Activated T-helper 1 cell treated with anti-CD3 and anti-CD28 coated beads, Interleukin-12 subunit alpha, Interleukin-12 subunit beta, Interleukin-2, Interleukin-4 antibody, amounts not matched to agents 30 ng/mL and 10 ng/mL and 1 ng/mL, durations not matched to agents 14 hours and 24 hours and 36 hours (primary cell): ENCODE measurements at regions of chr10 and their contacts with region 1.

Region 1: GRCh38 chr10:103685880-103686669 is 169.3 kb downstream of the SH3PXD2A start:
- DNase-seq: peak; percentile 66
- H3K4me3 Mint-ChIP-seq: no peak overlapping the region
- H3K27ac Mint-ChIP-seq: no peak overlapping the region
- H3K4me1 Mint-ChIP-seq: peaks cover 17% of the 10 kb centered on the region
- H3K27me3 Mint-ChIP-seq: no peaks in the 10 kb centered on the region

Region 2: GRCh38 chr10:103533827-103534226 is 152.2 kb before region 1 on chr10:
- intact Hi-C with region 1: no loop called
- DNase-seq: no peak
- H3K4me3 Mint-ChIP-seq: no peak overlapping the region
- H3K27ac Mint-ChIP-seq: no peak overlapping the region
- H3K4me1 Mint-ChIP-seq: no peaks in the 10 kb centered on the region
- H3K27me3 Mint-ChIP-seq: peaks cover 29% of the 10 kb centered on the region

Region 3: GRCh38 chr10:103605359-103606095 is 80.5 kb before region 1 on chr10:
- intact Hi-C with region 1: loop called (anchors 1 kb)
- DNase-seq: peak; percentile 25
- H3K4me3 Mint-ChIP-seq: no peak overlapping the region
- H3K27ac Mint-ChIP-seq: no peak overlapping the region
- H3K4me1 Mint-ChIP-seq: peaks cover 5% of the 10 kb centered on the region
- H3K27me3 Mint-ChIP-seq: no peaks in the 10 kb centered on the region

Region 4: DNA sequence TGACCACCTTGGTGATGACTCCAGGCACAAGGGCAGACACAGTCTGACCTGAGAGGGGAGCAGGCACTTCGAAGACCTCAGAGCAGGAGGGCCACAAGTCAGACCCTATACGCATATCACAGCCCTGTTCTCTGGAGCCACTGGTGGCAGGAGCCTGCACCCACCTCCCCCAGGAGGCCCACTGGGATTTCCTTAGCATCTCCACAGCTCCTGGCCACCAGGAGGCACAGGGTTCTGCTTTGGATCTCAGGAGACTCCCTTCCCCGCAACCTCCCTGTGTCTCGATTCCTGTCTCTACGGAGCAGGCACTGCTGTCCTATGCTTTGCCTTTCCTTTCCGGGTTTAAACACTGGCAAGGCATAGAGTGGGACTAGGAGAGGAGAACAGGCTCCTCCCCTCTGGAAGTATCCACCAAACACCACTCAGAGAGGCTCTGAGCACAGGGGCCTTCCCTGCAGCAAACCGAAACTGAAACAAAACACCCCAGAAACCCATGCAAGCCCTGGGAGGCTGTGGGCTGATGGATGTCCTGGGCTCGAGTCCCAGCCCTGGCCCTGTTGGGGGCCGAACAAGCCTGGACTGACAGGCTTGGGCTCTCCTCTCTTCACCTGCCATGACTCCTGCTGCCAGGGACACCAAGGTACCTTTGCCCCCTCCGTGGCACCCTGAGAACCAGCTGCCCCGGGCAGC is 26.3 kb before region 1 on chr10:
- intact Hi-C with region 1: loop called (anchors 1 kb)
- DNase-seq: peak; percentile 66
- H3K4me3 Mint-ChIP-seq: peak overlapping the region; percentile 89
- H3K27ac Mint-ChIP-seq: peak overlapping the region; percentile 83
- H3K4me1 Mint-ChIP-seq: peaks cover 8% of the 10 kb centered on the region
- H3K27me3 Mint-ChIP-seq: no peaks in the 10 kb centered on the region